Activated T-helper 1 cell treated with anti-CD3 and anti-CD28 coated beads, Interleukin-12 subunit alpha, Interleukin-12 subunit beta, Interleukin-2, Interleukin-4 antibody, amounts not matched to agents 30 ng/mL and 10 ng/mL and 1 ng/mL, durations not matched to agents 14 hours and 24 hours and 36 hours (primary cell): ENCODE measurements at regions of chr3 and their contacts with region 1.

Region 1: GRCh38 chr3:19866751-19867347 is 67.2 kb downstream of the EFHB start:
- DNase-seq: peak; percentile 5
- H3K4me3 Mint-ChIP-seq: no peak overlapping the region
- H3K27ac Mint-ChIP-seq: no peak overlapping the region
- H3K4me1 Mint-ChIP-seq: no peaks in the 10 kb centered on the region
- H3K27me3 Mint-ChIP-seq: peaks cover 3% of the 10 kb centered on the region

Region 2: GRCh38 chr3:19065027-19065426 is 801.8 kb before region 1 on chr3:
- intact Hi-C with region 1: loop called (anchors 5 kb)
- DNase-seq: no peak
- H3K4me3 Mint-ChIP-seq: no peak overlapping the region
- H3K27ac Mint-ChIP-seq: no peak overlapping the region
- H3K4me1 Mint-ChIP-seq: no peaks in the 10 kb centered on the region
- H3K27me3 Mint-ChIP-seq: peaks cover 9% of the 10 kb centered on the region

Region 3: DNA sequence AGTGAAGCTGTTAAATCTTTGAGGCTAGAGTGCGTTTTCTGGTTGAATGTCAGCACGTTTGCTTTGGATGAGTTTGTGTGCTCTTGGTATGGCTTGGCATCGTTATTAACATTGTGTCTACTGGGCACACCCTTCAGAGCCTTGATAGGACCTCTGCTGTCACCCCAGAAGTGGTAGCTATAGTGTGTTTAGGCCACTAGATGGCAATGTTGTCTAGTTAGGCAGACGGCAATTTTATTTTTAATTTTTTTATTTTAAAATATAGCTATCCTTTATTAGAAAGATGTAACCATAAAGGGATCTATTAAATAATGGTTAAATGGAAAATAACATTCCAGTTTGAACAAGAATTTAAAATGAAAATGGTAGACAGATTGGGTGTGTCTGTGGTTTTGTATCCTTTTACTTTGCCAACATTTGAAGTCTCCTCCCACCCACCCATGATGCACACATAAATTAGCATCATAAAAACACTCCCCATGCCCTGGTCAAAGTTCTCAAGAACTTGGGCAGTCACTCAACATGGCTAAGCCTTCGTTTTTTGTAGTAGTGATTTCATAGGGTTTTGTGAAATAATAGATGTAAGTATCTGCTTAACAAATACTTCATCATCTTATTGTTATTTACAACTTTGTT is 517.8 kb before region 1 on chr3:
- intact Hi-C with region 1: loop called (anchors 1 kb)
- DNase-seq: no peak
- H3K4me3 Mint-ChIP-seq: no peak overlapping the region
- H3K27ac Mint-ChIP-seq: no peak overlapping the region
- H3K4me1 Mint-ChIP-seq: no peaks in the 10 kb centered on the region
- H3K27me3 Mint-ChIP-seq: peaks cover 5% of the 10 kb centered on the region